ENCODE measurements at regions of chrX and their contacts with region 1.

Region 1: GRCh38 chrX:20530406-20530921 is 263.8 kb upstream of the RPS6KA3 start:
- DNase-seq: peak; percentile 33 to 55 (median 48)
- ATAC-seq: peak; percentile 68
- H3K4me3 ChIP-seq: no peak overlapping the region
- H3K27ac ChIP-seq: no peak overlapping the region
- H3K4me1 ChIP-seq: no peaks in the 10 kb centered on the region
- H3K27me3 ChIP-seq: no peaks in the 10 kb centered on the region
- CTCF ChIP-seq: peak; percentile 54 to 68 (median 61)
- EP300 ChIP-seq: no peak
- POLR2A ChIP-seq: no peak
- RAD21 ChIP-seq: peak; percentile 48 to 69

Region 2: DNA sequence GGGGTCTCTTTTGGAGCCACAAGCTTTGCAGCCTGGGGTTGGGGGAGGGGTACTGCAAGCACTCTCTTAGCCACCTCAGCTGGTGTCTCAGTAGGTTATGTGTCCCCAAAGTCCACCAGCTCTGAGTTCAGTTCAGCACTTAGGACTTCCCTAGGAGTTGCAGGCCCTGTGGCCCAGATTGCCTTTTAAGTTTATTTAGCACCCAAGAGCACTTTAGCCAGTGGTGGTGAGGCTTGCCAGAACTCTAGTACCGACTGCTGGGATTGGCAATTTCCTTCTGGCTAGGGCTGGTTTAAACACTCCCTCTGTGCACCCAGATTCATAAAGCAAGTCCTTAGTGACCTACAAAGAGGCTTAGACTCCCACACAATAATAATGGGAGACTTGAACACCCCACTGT is 226.1 kb after region 1 on chrX:
- CTCF ChIA-PET with region 1: no interaction called
- POLR2A ChIA-PET with region 1: no interaction called
- in situ Hi-C with region 1: no loop called
- intact Hi-C with region 1: no loop called
- DNase-seq: no peak
- ATAC-seq: no peak
- H3K4me3 ChIP-seq: no peak overlapping the region
- H3K27ac ChIP-seq: no peak overlapping the region
- H3K4me1 ChIP-seq: no peaks in the 10 kb centered on the region
- H3K27me3 ChIP-seq: no peaks in the 10 kb centered on the region
- CTCF ChIP-seq: no peak
- EP300 ChIP-seq: no peak
- POLR2A ChIP-seq: no peak
- RAD21 ChIP-seq: no peak

Region 3: DNA sequence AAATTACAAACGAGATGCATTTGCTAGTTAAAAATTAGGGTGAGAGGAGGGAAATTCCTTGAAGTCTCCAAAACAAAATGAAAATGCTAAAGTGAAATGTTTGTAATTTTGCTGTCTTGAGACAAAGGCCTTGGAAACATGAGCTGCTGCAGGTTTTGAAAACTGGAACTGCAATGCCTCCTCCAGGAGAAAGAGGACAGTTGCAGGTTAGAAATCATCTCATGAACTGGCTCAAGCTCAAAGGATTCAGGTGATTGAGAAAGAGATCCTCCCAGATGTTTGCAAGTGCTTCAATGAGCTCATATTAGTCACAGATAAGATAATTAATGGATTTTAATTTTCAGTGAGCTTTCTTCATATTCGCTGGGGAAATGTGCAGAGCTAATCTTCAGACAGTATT is 1195.0 kb after region 1 on chrX:
- CTCF ChIA-PET with region 1: no interaction called
- POLR2A ChIA-PET with region 1: no interaction called
- in situ Hi-C with region 1: no loop called
- intact Hi-C with region 1: loop called (anchors 5 kb)
- DNase-seq: peak in 2 of 4 experiments; percentile 3 to 7
- ATAC-seq: no peak
- H3K4me3 ChIP-seq: no peak overlapping the region
- H3K27ac ChIP-seq: no peak overlapping the region
- H3K4me1 ChIP-seq: no peaks in the 10 kb centered on the region
- H3K27me3 ChIP-seq: no peaks in the 10 kb centered on the region
- CTCF ChIP-seq: peak in 1 of 3 experiments; percentile 31; a peak in 2 of 6 replicates
- EP300 ChIP-seq: no peak
- POLR2A ChIP-seq: no peak
- RAD21 ChIP-seq: peak in 1 of 2 experiments; percentile 33; a peak in 2 of 4 replicates

Region 4: GRCh38 chrX:21740329-21741274 is 1210.1 kb after region 1 on chrX:
- CTCF ChIA-PET with region 1: no interaction called
- POLR2A ChIA-PET with region 1: no interaction called
- in situ Hi-C with region 1: loop called (anchors 5 kb)
- intact Hi-C with region 1: no loop called
- DNase-seq: no peak
- ATAC-seq: no peak
- H3K4me3 ChIP-seq: no peak overlapping the region
- H3K27ac ChIP-seq: no peak overlapping the region
- H3K4me1 ChIP-seq: no peaks in the 10 kb centered on the region
- H3K27me3 ChIP-seq: no peaks in the 10 kb centered on the region
- CTCF ChIP-seq: no peak
- EP300 ChIP-seq: no peak
- POLR2A ChIP-seq: no peak
- RAD21 ChIP-seq: no peak

Region 5: GRCh38 chrX:21745756-21746155 is 1215.3 kb after region 1 on chrX:
- CTCF ChIA-PET with region 1: interaction called, 3 read pairs
- POLR2A ChIA-PET with region 1: no interaction called
- in situ Hi-C with region 1: loop called (anchors 5 kb)
- intact Hi-C with region 1: loop called (anchors 2 kb)
- DNase-seq: peak; percentile 9 to 26 (median 20)
- ATAC-seq: peak; percentile 74; the same call in 2 of the 3 replicates
- H3K4me3 ChIP-seq: no peak overlapping the region
- H3K27ac ChIP-seq: no peak overlapping the region
- H3K4me1 ChIP-seq: no peaks in the 10 kb centered on the region
- H3K27me3 ChIP-seq: no peaks in the 10 kb centered on the region
- CTCF ChIP-seq: peak; percentile 34 to 56 (median 54); a peak in 5 of 6 replicates
- EP300 ChIP-seq: no peak
- POLR2A ChIP-seq: no peak
- RAD21 ChIP-seq: peak; percentile 7 to 44; a peak in 2 of 4 replicates

Measured in K562 (cell line).